Activated CD4-positive, alpha-beta memory T cell treated with anti-CD3 and anti-CD28 coated beads, Interleukin-2, amount 10 ng/mL, durations not matched to agents 7 days and 5 days (primary cell): ENCODE measurements at regions of chr1 and their contacts with region 1.

Region 1: GRCh38 chr1:212608209-212608955 is at the start of gene ATF3:
- DNase-seq: peak; percentile 95
- H3K4me3 Mint-ChIP-seq: peak within 1 kb of the TSS; percentile 95
- H3K27ac Mint-ChIP-seq: peak within 1 kb of the TSS; percentile 91
- H3K4me1 Mint-ChIP-seq: peaks cover 51% of the 10 kb centered on the region
- H3K27me3 Mint-ChIP-seq: peaks cover 39% of the 10 kb centered on the region
- total RNA-seq, gene ATF3: 21.6 to 21.8 TPM

Region 2: GRCh38 chr1:212450331-212450881 is 158.0 kb before region 1 on chr1:
- CTCF ChIA-PET with region 1: no interaction called
- POLR2A ChIA-PET with region 1: no interaction called
- DNase-seq: no peak
- H3K4me3 Mint-ChIP-seq: no peak overlapping the region
- H3K27ac Mint-ChIP-seq: no peak overlapping the region
- H3K4me1 Mint-ChIP-seq: no peaks in the 10 kb centered on the region
- H3K27me3 Mint-ChIP-seq: no peaks in the 10 kb centered on the region

Region 3: DNA sequence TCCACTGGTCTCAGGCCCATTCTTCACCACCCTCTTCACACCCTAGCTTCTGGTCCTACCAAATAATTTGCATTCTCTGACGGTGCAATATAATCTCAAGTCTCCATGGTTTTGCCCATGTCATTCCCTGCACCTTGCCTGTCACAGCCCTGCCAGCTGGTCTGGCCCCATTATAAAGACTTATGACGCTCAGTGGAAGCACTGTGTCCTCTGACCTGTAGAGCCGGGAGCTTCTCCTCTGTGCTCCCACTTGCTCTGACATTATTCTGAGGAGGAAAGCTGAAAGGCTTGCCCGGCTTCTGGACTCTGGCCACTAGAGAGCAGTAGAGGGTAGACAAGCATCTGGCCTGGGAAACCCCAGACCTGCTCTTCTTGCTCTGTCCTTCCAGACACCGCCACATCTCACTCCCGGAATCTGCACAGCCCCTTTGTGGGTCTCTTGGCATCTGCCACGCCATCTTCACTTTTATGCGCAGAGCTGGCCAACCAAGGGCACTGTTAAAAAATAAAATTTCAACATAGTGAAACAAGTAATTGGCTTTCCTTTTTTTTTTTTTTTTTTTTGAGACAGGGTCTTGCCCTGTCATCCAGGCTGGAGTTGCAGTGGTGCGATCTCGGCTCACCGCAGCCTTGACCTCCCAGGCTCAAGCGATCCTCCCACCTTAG is 131.2 kb before region 1 on chr1:
- CTCF ChIA-PET with region 1: interaction called, 21 read pairs
- POLR2A ChIA-PET with region 1: interaction called, 14 read pairs
- DNase-seq: peak; percentile 79
- H3K4me3 Mint-ChIP-seq: no peak overlapping the region
- H3K27ac Mint-ChIP-seq: no peak overlapping the region
- H3K4me1 Mint-ChIP-seq: peaks cover 19% of the 10 kb centered on the region
- H3K27me3 Mint-ChIP-seq: peaks cover 19% of the 10 kb centered on the region

Region 4: GRCh38 chr1:212558693-212559480 is 49.5 kb before region 1 on chr1:
- CTCF ChIA-PET with region 1: interaction called, 3 read pairs
- POLR2A ChIA-PET with region 1: interaction called, 36 read pairs
- DNase-seq: peak; percentile 94
- H3K4me3 Mint-ChIP-seq: peak overlapping the region; percentile 71
- H3K27ac Mint-ChIP-seq: peak overlapping the region; percentile 85
- H3K4me1 Mint-ChIP-seq: peaks cover 16% of the 10 kb centered on the region
- H3K27me3 Mint-ChIP-seq: peaks cover 35% of the 10 kb centered on the region

Region 5: DNA sequence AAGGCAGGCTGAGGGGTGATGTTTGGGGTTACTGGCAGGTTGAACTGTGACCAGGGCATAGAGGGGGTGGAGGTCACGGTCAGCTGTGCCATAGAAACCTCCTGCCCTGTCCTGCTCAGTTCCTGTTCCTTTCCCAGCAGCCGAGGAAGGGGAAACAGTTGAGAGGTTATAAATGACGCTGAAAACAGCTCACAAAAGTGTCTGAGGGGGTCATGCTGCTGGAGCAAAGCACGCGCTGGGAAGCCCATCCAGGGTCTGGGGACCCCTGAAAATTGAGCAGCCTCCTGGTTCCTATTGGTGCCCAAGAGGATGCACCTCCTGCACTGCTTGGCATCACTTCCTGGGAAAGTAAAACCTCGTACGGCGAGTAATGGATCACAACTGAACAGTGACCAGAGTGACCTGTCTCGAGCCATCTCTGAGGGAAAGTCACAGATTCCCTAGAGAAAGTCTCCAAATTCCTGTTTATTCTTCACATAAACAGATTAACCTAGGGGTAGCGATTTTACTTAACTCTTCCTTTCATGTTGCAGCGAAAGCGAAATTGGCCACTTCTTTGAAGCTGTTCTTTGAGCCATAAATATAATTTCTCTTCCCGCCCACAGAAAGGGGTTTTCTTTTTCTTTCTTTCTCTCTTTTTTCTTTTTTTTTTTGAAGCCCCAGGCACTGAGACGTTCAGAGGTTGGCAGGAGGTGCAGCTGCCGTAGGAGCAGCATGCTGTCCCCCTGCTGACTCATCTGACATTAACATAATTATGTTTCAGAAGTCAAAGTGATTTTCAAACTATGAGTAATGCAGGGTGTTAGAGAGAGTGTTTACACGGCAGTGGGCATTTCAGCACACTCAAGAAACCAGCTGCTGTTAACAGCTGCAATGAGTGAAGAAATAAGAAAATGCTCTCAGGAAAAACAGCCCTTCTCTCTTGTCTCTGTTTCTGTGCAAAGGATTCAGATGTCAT is 41.6 kb before region 1 on chr1:
- CTCF ChIA-PET with region 1: interaction called, 9 read pairs
- POLR2A ChIA-PET with region 1: interaction called, 40 read pairs
- DNase-seq: peak; percentile 64
- H3K4me3 Mint-ChIP-seq: peak overlapping the region; percentile 80
- H3K27ac Mint-ChIP-seq: peak overlapping the region; percentile 86
- H3K4me1 Mint-ChIP-seq: peaks cover 24% of the 10 kb centered on the region
- H3K27me3 Mint-ChIP-seq: peaks cover 18% of the 10 kb centered on the region

Region 6: GRCh38 chr1:212595787-212596714 is 12.3 kb before region 1 on chr1:
- CTCF ChIA-PET with region 1: interaction called, 29 read pairs
- POLR2A ChIA-PET with region 1: interaction called, 94 read pairs
- DNase-seq: peak; percentile 50
- H3K4me3 Mint-ChIP-seq: peak overlapping the region; percentile 76
- H3K27ac Mint-ChIP-seq: peak overlapping the region; percentile 98
- H3K4me1 Mint-ChIP-seq: peaks cover 26% of the 10 kb centered on the region
- H3K27me3 Mint-ChIP-seq: peaks cover 16% of the 10 kb centered on the region

Region 7: GRCh38 chr1:212621951-212622305 is 13.5 kb after region 1 on chr1:
- CTCF ChIA-PET with region 1: interaction called, 4 read pairs
- POLR2A ChIA-PET with region 1: interaction called, 39 read pairs
- DNase-seq: no peak
- H3K4me3 Mint-ChIP-seq: no peak overlapping the region
- H3K27ac Mint-ChIP-seq: no peak overlapping the region
- H3K4me1 Mint-ChIP-seq: peaks cover 10% of the 10 kb centered on the region
- H3K27me3 Mint-ChIP-seq: no peaks in the 10 kb centered on the region

Region 8: GRCh38 chr1:212791676-212792395 is 183.5 kb after region 1 on chr1 and contains the starts of genes NSL1 and TATDN3:
- CTCF ChIA-PET with region 1: no interaction called
- POLR2A ChIA-PET with region 1: interaction called, 19 read pairs
- DNase-seq: peak; percentile 94
- H3K4me3 Mint-ChIP-seq: peak within 1 kb of the TSS; percentile 100
- H3K27ac Mint-ChIP-seq: peak within 1 kb of the TSS; percentile 95
- H3K4me1 Mint-ChIP-seq: peaks cover 49% of the 10 kb centered on the region
- H3K27me3 Mint-ChIP-seq: no peaks in the 10 kb centered on the region
- total RNA-seq, gene NSL1: 36.4 to 38.1 TPM
- total RNA-seq, gene TATDN3: 18.6 to 20.2 TPM

Region 9: DNA sequence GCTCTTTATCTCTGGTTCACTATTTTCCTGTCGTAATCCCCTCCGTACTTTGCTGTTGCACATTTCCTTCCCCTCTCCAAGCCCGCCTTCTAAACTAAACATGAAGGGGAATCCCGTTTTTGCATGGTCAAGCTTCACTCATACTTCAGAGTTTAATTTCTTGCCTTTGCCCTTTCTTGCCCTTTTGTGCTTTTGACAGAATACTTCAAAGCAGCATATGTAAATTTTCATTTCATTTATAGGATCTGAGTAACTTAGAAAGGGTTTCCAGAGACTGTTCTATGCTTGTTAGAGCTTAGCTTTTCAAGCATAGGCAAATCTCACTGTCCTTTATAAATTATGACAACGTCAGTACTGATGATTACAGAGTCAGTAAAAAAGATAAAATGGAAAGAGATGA is 211.3 kb after region 1 on chr1:
- CTCF ChIA-PET with region 1: no interaction called
- POLR2A ChIA-PET with region 1: no interaction called
- DNase-seq: no peak
- H3K4me3 Mint-ChIP-seq: no peak overlapping the region
- H3K27ac Mint-ChIP-seq: no peak overlapping the region
- H3K4me1 Mint-ChIP-seq: peaks cover 2% of the 10 kb centered on the region
- H3K27me3 Mint-ChIP-seq: no peaks in the 10 kb centered on the region